ENCODE measurements at regions of chr19 and their contacts with region 1.

Region 1: DNA sequence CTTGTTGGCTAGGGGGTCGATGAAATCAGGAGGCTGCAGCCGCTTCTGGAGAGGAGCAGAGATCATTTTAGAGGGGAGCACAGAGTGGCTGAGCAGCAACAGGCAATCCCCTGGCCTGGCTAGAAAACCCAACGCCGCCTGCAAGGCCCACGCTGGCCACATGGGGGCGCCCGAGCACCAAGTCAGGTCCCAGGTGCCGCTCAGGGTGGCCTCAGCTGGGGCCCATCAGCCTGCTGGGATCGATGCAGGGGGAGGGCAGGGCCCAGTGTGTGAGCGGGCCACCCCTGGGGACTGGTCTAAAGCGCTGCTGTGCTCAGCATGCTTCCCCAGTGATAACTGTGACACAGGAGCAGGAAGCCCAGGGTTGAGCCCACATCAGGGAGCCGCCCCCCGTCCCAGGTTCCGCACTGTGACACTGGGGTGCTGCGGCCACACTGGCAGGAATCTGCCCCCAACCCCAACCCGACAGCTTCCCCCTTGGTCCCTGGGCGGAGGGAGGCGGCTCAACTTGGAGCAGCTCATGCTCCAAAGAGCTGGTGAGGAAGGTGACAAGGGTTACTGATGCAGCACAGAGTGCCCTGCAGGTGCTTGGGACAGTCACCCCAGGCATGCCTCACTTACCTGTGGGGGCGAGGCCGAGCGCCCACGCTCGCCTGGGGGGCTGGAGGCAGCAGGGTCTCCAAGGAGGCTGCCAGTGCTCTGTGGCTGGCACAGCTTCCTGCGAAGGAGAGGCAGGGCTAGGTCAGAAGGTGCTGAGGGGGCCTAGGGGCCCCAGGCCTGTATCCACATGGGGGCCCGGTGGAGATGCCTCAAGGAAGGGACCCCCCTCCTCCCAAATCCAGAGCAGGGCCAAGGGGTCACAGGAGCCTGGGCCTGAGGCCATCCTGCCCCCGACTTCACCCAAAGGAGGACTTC is 13.3 kb upstream of the ISYNA1 start:
- DNase-seq: peak; percentile 88
- H3K4me3 Mint-ChIP-seq: no peak overlapping the region
- H3K27ac Mint-ChIP-seq: no peak overlapping the region
- H3K4me1 Mint-ChIP-seq: peaks cover 3% of the 10 kb centered on the region
- H3K27me3 Mint-ChIP-seq: no peaks in the 10 kb centered on the region

Region 2: DNA sequence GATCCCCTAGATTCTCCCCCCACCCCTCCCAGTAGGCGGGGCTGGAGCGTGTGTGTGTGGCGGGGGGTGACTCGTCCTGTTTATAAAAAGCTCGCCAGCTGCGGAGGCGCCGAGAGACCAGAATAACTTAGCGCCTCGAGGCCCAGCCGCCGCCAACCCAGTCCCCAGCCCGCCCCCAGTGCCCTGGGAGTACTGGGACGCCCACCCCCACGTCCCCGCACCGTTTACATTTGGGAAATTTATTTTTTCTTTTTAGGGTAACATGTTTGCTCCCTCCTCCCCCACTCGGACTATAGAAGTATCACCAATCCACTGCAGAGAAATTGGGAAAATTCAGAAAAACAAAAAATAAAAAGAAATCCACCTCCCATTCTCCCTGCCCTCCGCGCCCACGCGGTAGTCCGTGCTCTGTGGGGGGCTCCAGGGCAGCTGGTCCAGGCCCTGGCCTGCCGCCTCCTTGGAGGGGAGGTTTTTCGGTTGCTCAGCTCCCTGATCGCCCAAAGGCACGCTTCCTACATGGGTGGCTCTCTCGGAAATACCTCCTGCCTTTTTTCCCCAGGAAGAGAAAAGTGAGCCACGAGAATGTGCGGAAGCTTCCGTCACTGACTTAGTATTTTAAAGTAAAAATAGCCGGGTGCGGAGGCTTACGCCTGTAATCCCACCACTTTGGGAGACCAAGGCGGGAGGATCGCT is 245.8 kb before region 1 on chr19:
- CTCF ChIA-PET with region 1: no interaction called
- POLR2A ChIA-PET with region 1: no interaction called
- DNase-seq: peak; percentile 64
- H3K4me3 Mint-ChIP-seq: peak overlapping the region; percentile 90
- H3K27ac Mint-ChIP-seq: peak overlapping the region; percentile 52
- H3K4me1 Mint-ChIP-seq: peaks cover 31% of the 10 kb centered on the region
- H3K27me3 Mint-ChIP-seq: peaks cover 8% of the 10 kb centered on the region

Region 3: DNA sequence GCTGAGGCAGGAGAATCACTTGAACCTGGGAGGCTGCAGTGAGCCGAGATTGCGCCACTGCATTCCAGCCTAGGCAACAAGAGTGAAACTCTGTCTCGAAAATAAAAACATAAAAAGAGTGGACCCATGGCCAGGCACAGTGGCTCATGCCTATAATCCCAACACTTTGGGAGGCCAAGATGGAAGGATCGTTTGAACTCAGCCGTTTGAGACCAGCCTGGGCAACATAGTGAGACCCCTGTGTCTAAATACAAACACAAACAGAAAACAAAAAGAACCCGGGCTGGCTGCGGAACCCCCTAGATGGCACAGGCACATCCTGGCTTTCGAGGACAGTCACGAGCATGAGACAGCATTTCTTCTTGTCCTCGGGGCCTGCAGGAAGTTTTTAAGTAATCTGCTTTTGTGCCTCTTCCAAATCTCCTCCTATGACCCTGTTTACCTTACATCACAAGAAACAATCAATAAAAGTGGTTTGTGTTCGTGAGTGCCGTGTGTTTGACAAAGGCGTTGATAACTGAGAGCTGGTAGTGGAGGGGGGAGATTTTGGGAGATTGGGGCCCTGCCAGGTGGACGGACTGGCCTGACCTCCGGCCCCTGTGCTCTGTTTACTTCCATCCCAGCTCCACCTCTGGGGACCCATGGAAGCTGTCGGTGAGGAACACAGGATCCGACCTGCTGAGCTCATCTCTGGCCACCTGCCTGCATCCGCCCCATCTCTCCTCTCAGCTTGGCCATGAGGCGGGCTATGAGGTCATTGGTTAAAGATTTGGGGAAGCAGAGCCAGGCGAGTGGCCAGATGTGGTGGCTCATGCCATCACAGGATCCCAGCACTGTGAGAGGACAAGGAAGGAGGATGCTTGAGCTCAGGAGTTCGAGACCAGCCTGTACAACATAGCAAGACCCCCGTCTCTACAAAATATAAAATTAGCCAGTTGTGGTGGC is 71.1 kb before region 1 on chr19:
- CTCF ChIA-PET with region 1: no interaction called
- POLR2A ChIA-PET with region 1: no interaction called
- DNase-seq: no peak
- H3K4me3 Mint-ChIP-seq: no peak overlapping the region
- H3K27ac Mint-ChIP-seq: no peak overlapping the region
- H3K4me1 Mint-ChIP-seq: peaks cover 3% of the 10 kb centered on the region
- H3K27me3 Mint-ChIP-seq: peaks cover 6% of the 10 kb centered on the region

Region 4: DNA sequence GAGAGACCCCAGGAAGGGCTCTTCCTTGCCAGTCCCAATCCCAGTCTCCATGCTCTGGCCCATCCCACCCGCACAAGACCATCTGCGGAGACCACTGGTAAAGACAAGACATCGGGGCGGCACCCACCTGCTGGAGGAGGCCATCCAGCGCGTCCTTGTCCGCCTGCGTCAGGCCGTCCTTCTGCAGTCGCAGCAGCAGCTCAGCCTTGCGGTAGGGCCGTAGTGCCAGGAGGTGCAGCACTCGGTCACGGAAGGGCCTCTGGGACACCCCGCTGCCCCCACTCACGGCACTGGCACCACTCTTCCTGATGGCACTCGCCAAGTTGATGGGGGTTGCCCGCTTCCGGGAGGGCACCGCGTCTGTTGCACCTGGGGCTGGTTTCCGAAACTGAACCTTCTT is 10.3 kb after region 1 on chr19:
- CTCF ChIA-PET with region 1: interaction called, 13 read pairs
- POLR2A ChIA-PET with region 1: interaction called, 3 read pairs
- DNase-seq: no peak
- H3K4me3 Mint-ChIP-seq: no peak overlapping the region
- H3K27ac Mint-ChIP-seq: no peak overlapping the region
- H3K4me1 Mint-ChIP-seq: peaks cover 11% of the 10 kb centered on the region
- H3K27me3 Mint-ChIP-seq: no peaks in the 10 kb centered on the region

Measured in activated CD4-positive, alpha-beta memory T cell treated with anti-CD3 and anti-CD28 coated beads, Interleukin-2, amount 10 ng/mL, durations not matched to agents 7 days and 5 days (primary cell).